ENCODE measurements at regions of chr14 and their contacts with region 1.

Region 1: DNA sequence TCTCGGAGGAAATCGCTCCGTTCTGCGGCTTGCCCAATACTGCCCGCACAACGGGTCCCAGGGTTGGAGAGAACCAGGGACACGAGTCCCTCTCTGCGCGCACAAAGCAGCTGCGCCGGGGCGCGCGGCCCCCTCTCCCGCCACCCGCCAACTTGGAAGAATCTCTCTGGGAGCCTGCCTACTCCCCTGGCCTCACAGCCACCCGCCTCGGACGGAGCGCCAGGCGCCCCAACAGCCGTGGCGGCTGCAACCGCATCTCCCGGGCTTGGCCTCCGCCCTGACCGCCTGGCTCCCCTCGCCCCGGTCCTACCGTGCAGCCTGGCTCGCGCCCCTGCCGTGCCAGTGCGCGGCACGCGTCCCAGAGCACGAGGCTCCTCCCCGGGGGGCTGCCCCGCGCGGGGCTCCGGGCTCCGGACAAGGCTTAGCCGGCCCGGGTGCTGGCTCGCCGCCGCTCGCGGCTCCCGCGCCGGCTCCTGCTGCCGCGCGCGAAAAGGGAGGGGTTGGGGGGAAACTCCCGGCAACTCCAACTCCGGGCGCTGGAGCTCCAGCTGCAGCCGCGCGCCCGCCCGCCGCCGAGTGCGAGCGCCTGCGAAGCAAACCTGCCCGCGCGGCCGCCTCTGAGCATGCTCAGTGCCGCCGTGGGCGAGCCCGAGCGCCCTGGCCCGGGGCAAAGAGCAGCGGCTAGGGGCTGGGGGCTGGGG is at the start of gene STXBP6:
- DNase-seq: peak; percentile 76 to 89 (median 84)
- ATAC-seq: peak; percentile 39 to 92 (median 84)
- H3K4me3 ChIP-seq: peak within 1 kb of the TSS; percentile 65 to 90 (median 76)
- H3K27ac ChIP-seq: peak within 1 kb of the TSS; percentile 56 to 93 (median 85)
- H3K4me1 ChIP-seq: peaks cover 4 to 46% (median 13%) of the 10 kb centered on the region in 12 donors
- H3K27me3 ChIP-seq: peaks cover 0 to 47% (median 0%) of the 10 kb centered on the region in 9 donors
- CTCF ChIP-seq: no peak
- POLR2A ChIP-seq: peak in 1 of 2 donors; percentile 55
- total RNA-seq, gene STXBP6: 12.5 to 30.9 (median 22.5) TPM

Region 2: GRCh38 chr14:24817212-24818057 is 232.3 kb before region 1 on chr14:
- intact Hi-C with region 1: loop called in 3 of 10 experiments (anchors 2 to 5 kb)
- DNase-seq: peak in 4 of 5 donors; percentile 38 to 58 (median 42)
- ATAC-seq: peak; percentile 52 to 74 (median 63)
- H3K4me3 ChIP-seq: no peak overlapping the region
- H3K27ac ChIP-seq: peak overlapping the region; percentile 9 to 78 (median 66)
- H3K4me1 ChIP-seq: peaks cover 8 to 74% (median 35%) of the 10 kb centered on the region in 12 donors
- H3K27me3 ChIP-seq: no peaks in the 10 kb centered on the region
- CTCF ChIP-seq: peak in 9 of 12 donors; percentile 15 to 61 (median 38)
- POLR2A ChIP-seq: no peak

Region 3: GRCh38 chr14:24875991-24876878 is 173.5 kb before region 1 on chr14:
- intact Hi-C with region 1: no loop called
- DNase-seq: peak in 1 of 5 donors; percentile 24
- ATAC-seq: peak in 3 of 4 donors; percentile 19 to 31 (median 23)
- H3K4me3 ChIP-seq: no peak overlapping the region
- H3K27ac ChIP-seq: peak overlapping the region in 9 of 12 donors; percentile 3 to 50 (median 26)
- H3K4me1 ChIP-seq: peaks cover 9 to 88% (median 47%) of the 10 kb centered on the region in 12 donors
- H3K27me3 ChIP-seq: no peaks in the 10 kb centered on the region
- CTCF ChIP-seq: no peak
- POLR2A ChIP-seq: no peak

Region 4: DNA sequence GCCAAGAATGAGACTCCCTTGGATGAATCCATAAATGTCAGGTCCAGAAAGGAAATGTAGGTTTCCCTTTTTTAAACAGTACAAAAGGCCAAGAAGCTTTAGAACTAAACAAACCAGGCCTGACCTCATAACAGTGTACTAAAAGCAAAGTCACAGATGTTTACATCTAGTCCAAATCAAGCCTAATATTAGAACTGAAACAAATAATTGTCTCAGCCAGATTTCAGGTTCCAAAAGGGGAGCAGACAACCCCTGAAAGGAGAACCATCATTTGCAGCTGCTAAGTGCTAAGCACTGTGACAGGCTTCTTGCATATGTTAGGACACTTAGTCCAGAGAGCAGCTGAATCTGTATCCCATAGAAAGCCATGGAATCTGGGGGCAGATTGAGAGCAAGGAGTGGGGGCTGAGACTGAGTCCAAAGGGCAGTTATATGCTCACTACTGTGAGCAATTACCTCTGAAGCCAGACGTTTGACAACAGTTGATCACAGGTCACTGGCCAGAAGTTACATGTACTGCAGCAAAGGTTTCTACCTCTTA is 89.9 kb before region 1 on chr14:
- intact Hi-C with region 1: loop called in 3 of 10 experiments (anchors 5 to 10 kb)
- DNase-seq: no peak
- ATAC-seq: peak; percentile 66 to 72 (median 66)
- H3K4me3 ChIP-seq: no peak overlapping the region
- H3K27ac ChIP-seq: peak overlapping the region in 11 of 12 donors; percentile 1 to 70 (median 51)
- H3K4me1 ChIP-seq: peaks cover 5 to 69% (median 35%) of the 10 kb centered on the region in 12 donors
- H3K27me3 ChIP-seq: no peaks in the 10 kb centered on the region
- CTCF ChIP-seq: no peak
- POLR2A ChIP-seq: no peak

Region 5: GRCh38 chr14:25006961-25007795 is 42.5 kb before region 1 on chr14:
- intact Hi-C with region 1: loop called in 1 of 10 experiments (anchors 5 kb)
- DNase-seq: no peak
- ATAC-seq: peak; percentile 47 to 92 (median 83)
- H3K4me3 ChIP-seq: no peak overlapping the region
- H3K27ac ChIP-seq: peak overlapping the region in 5 of 12 donors; percentile 5 to 54 (median 14)
- H3K4me1 ChIP-seq: peaks cover 14 to 76% (median 35%) of the 10 kb centered on the region in 12 donors
- H3K27me3 ChIP-seq: no peaks in the 10 kb centered on the region
- CTCF ChIP-seq: no peak
- POLR2A ChIP-seq: no peak

Region 6: GRCh38 chr14:25090716-25091454 is 41.2 kb after region 1 on chr14:
- intact Hi-C with region 1: no loop called
- DNase-seq: no peak
- ATAC-seq: no peak
- H3K4me3 ChIP-seq: no peak overlapping the region
- H3K27ac ChIP-seq: no peak overlapping the region
- H3K4me1 ChIP-seq: peaks cover 0 to 5% (median 0%) of the 10 kb centered on the region in 12 donors
- H3K27me3 ChIP-seq: no peaks in the 10 kb centered on the region
- CTCF ChIP-seq: no peak
- POLR2A ChIP-seq: no peak

Region 7: GRCh38 chr14:25121337-25122122 is 71.8 kb after region 1 on chr14:
- intact Hi-C with region 1: loop called in 1 of 10 experiments (anchors 10 kb)
- DNase-seq: no peak
- ATAC-seq: peak; percentile 59 to 83 (median 74)
- H3K4me3 ChIP-seq: no peak overlapping the region
- H3K27ac ChIP-seq: peak overlapping the region in 5 of 12 donors; percentile 1 to 41 (median 27)
- H3K4me1 ChIP-seq: peaks cover 0 to 28% (median 6%) of the 10 kb centered on the region in 12 donors
- H3K27me3 ChIP-seq: no peaks in the 10 kb centered on the region
- CTCF ChIP-seq: no peak
- POLR2A ChIP-seq: no peak

Measured in heart left ventricle (tissue), 16 donors.